ENCODE measurements at regions of chr6 and their contacts with region 1.

Region 1: DNA sequence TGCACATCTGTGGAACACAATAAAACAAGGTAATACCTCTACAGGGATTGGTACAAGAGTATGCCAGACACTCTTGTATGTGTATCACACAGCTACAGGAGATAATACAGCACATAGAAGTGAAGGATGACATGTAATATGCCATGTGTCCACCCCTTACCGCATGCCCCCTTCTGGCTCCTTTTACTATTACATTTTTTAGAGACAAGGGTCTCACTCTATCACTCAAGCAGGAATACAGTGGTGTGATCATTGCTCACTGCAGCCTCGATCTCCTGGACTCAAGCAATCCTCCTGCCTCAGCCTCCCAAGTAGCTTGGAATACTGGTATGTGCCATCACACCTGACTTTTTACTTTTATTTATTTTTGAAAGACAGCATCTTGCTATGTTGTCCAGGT is 4.2 kb upstream of the NCR3 start:
- DNase-seq: no peak
- CTCF ChIP-seq: no peak

Region 2: DNA sequence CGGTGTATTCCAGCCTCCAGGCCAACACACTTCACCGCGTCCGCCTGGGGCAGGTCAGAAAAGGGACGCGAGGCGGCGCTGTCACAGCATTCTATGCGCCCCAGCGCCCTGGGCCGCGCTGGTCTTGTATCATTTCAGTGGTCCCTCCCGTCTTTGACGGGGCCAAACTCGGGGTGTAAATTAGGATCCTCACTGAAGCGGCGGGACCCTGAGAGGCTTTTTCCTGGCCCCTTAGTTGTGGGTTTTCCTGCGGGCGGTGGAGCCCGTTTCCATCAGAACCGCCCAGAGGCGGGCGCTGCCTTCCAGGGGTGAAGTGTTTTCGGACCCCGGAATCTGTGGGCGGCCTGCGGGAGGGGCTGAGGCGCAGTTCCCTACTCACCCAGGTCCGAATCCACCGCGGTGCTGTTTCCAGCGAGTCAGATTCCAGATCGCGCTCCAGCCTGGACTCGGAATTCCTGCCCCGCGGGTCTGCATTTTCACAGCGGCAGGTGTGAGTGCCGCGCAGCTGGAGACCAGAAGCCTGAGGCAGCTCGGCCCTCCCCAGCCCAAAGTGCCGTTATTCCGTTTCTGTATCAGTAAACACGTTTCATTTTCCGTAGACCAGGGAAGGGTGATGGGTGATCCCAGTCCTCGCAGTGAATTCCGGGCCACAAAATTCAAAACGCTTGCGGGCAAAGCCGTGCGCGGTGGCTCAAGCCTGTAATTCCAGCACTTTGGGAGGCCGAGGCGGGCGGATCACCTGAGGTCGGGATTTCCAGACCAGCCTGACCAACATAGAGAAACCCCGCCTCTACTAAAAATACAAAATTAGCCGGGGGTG is 102.9 kb before region 1 on chr6:
- in situ Hi-C with region 1: loop called (anchors 10 kb)
- DNase-seq: peak; percentile 77
- CTCF ChIP-seq: peak; percentile 85

Region 3: DNA sequence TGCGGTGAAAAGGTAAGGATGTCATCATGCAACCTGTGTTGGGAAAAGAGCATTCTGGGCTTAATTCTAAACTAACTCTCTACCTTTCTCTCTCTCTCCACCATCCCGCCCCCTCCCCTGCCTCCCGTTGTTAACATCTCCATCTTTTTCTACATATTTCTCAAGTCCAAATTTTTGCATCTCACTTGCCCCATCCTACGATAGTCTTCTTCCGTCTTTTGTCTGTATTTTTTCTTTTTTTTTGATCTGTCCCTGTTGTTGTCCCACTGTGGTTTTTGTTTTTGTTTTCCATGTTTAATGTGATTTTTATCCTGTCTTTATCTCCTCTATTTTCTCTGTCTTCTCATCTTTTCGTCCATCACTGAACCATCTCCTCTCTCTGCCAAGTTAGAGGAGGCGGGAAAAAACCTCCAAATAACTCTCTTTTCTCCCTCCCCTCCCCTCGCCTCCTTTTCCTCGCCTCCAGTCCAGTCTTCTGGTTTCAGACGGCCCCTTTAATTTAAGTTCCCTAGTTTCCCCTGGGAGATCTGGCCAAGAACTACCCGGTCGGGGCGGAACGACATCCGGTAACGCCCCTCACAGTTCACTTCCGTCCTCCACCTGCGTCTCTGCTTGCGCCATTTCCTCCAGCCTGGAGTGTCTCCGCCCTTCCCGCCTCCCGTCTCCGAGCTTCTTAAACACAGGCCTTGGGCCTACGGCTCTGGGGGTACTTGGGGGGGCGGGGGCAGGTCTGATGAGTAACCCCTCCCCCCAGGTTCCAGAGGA is 49.9 kb before region 1 on chr6 and contains the start of gene NFKBIL1:
- in situ Hi-C with region 1: loop called (anchors 5 kb)
- DNase-seq: peak; percentile 90
- CTCF ChIP-seq: no peak